ENCODE measurements at regions of chr5 and their contacts with region 1.

Region 1: DNA sequence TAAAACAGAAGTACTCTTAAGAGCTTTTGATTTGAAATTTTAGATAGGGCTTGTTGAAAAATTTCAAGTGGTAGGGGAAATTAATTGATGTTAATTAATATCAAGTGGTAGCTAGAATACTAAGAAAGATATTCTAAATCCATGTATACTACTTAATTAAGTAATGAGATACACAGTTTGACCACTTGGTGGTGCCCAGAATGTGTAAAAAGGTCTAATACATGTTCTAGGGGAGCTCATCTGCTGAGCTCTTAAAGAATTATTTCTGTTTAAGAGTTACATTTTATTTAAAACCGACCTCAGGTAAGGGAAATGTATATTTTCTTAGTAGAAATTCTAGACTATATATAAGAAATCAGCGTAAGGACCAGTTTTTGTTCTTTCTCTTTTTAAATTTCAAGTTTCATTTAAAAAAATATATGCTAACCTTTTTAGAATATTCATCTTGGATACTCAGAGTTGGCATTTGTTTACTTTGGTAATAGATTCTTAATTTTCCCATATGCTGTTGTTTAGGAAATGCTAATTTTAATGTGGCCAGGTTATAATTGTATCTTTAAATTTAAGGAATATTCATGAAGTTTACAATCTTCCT is 61.5 kb downstream of the LNPEP start:
- DNase-seq: no peak
- H3K4me3 Mint-ChIP-seq: no peak overlapping the region
- H3K27ac Mint-ChIP-seq: no peak overlapping the region
- H3K4me1 Mint-ChIP-seq: peaks cover 35% of the 10 kb centered on the region
- H3K27me3 Mint-ChIP-seq: no peaks in the 10 kb centered on the region

Region 2: GRCh38 chr5:96984506-96985192 is 12.7 kb before region 1 on chr5:
- intact Hi-C with region 1: loop called (anchors 1 kb)
- DNase-seq: no peak
- H3K4me3 Mint-ChIP-seq: no peak overlapping the region
- H3K27ac Mint-ChIP-seq: no peak overlapping the region
- H3K4me1 Mint-ChIP-seq: peaks cover 29% of the 10 kb centered on the region
- H3K27me3 Mint-ChIP-seq: no peaks in the 10 kb centered on the region

Measured in activated T-helper 1 cell treated with anti-CD3 and anti-CD28 coated beads, Interleukin-12 subunit alpha, Interleukin-12 subunit beta, Interleukin-2, Interleukin-4 antibody, amounts not matched to agents 30 ng/mL and 10 ng/mL and 1 ng/mL, durations not matched to agents 14 hours and 24 hours and 36 hours (primary cell).